ENCODE measurements at regions of chr7 and their contacts with region 1.

Region 1: DNA sequence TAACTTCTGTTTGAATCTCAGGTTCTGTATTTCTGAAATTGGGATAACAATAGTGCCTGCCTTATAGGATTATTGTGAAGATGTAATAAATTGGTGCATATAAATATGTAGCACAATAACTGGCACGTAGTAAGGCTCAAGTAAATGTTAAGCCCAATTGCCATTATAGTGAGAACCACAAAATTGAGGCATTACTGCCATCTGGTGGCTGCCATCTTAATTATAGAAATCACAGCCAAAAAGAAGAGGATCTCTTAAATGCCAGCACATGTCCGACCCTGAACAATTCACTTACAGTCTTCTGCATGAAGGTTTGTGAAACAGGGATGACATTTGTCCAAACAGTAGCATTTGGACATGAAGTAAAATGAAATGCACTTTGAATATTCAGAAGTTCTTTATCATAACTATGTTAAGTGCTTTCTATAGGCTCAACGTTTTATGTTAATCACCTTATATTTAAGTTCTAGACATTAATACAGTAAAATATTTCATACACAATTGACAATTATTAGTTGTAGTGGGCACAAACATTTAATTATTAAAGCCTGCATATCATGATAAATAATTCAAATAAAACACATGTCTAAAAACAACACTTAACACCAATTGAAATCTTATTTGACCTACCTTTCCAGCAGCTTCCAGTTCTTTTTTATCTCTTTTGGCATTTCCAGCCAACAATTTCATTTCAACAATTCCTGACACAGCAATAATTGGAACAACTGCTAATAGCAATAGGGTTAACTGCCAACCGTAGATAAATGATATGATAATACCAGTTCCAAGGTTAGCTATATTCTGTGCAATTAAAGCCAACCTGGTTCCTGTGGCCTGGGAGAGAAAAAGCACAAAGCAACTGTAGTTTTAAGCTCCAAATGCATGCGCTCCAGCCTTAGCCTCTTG is 58.5 kb downstream of the ABCB4 start:
- DNase-seq: peak; percentile 66
- H3K4me3 Mint-ChIP-seq: no peak overlapping the region
- H3K27ac Mint-ChIP-seq: no peak overlapping the region
- H3K4me1 Mint-ChIP-seq: no peaks in the 10 kb centered on the region
- H3K27me3 Mint-ChIP-seq: no peaks in the 10 kb centered on the region

Region 2: GRCh38 chr7:86592185-86592584 is 824.8 kb before region 1 on chr7:
- CTCF ChIA-PET with region 1: no interaction called
- POLR2A ChIA-PET with region 1: no interaction called
- intact Hi-C with region 1: no loop called
- DNase-seq: no peak
- H3K4me3 Mint-ChIP-seq: no peak overlapping the region
- H3K27ac Mint-ChIP-seq: no peak overlapping the region
- H3K4me1 Mint-ChIP-seq: no peaks in the 10 kb centered on the region
- H3K27me3 Mint-ChIP-seq: no peaks in the 10 kb centered on the region

Region 3: GRCh38 chr7:86914551-86914950 is 502.4 kb before region 1 on chr7:
- CTCF ChIA-PET with region 1: interaction called, 5 read pairs
- POLR2A ChIA-PET with region 1: no interaction called
- intact Hi-C with region 1: loop called (anchors 2 kb)
- DNase-seq: no peak
- H3K4me3 Mint-ChIP-seq: no peak overlapping the region
- H3K27ac Mint-ChIP-seq: no peak overlapping the region
- H3K4me1 Mint-ChIP-seq: peaks cover 7% of the 10 kb centered on the region
- H3K27me3 Mint-ChIP-seq: no peaks in the 10 kb centered on the region

Region 4: DNA sequence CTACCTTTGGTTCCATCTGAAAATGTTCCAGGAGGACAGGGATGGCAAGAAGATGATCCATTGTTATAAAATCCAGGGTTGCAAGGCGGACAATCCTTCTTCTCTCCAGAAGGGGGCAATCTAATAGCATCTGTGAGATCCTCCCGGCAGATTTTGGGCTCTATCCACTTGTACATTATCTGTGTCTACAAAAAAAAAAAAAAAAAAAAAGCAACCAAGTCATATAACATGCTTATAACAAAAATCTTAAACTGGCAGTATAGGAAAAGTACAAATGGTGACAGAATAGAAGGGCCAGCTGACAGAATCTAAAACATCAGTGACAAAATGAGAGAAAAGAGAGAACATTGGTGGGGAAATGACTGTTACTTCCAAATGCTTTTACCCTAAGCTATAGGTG is 490.2 kb before region 1 on chr7:
- CTCF ChIA-PET with region 1: interaction called, 49 read pairs
- POLR2A ChIA-PET with region 1: no interaction called
- intact Hi-C with region 1: no loop called
- DNase-seq: no peak
- H3K4me3 Mint-ChIP-seq: no peak overlapping the region
- H3K27ac Mint-ChIP-seq: no peak overlapping the region
- H3K4me1 Mint-ChIP-seq: peaks cover 4% of the 10 kb centered on the region
- H3K27me3 Mint-ChIP-seq: no peaks in the 10 kb centered on the region

Region 5: DNA sequence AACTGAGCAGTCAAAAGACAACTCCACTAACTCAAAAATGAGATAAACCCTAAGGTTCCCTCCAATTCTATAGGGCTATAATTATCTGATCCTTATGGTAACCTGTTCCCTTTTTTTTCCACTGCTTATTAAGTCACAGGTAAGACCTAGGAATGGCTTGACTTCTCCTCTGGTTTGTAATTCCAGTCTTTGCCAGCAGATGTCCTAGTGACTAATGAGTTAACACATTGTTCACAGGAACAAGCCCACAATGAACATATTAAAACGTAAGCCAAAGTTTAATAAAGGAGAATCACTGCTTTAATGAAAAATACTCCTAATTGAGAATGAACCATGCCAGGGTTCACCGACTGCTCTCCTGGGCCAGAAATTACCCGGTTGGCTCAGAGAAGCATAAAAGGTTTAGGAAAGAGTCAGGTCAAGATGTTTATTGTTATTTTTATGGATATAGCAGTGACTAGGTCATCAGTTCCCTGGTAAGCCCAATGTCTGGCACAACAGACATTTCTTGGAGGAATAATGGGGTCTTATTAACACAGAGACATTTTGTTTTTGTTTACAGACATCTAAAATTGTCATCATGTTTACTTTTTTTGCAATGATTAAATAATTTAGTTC is 477.6 kb before region 1 on chr7:
- CTCF ChIA-PET with region 1: interaction called, 11 read pairs
- POLR2A ChIA-PET with region 1: no interaction called
- intact Hi-C with region 1: loop called (anchors 1 kb)
- DNase-seq: no peak
- H3K4me3 Mint-ChIP-seq: no peak overlapping the region
- H3K27ac Mint-ChIP-seq: no peak overlapping the region
- H3K4me1 Mint-ChIP-seq: no peaks in the 10 kb centered on the region
- H3K27me3 Mint-ChIP-seq: no peaks in the 10 kb centered on the region

Region 6: DNA sequence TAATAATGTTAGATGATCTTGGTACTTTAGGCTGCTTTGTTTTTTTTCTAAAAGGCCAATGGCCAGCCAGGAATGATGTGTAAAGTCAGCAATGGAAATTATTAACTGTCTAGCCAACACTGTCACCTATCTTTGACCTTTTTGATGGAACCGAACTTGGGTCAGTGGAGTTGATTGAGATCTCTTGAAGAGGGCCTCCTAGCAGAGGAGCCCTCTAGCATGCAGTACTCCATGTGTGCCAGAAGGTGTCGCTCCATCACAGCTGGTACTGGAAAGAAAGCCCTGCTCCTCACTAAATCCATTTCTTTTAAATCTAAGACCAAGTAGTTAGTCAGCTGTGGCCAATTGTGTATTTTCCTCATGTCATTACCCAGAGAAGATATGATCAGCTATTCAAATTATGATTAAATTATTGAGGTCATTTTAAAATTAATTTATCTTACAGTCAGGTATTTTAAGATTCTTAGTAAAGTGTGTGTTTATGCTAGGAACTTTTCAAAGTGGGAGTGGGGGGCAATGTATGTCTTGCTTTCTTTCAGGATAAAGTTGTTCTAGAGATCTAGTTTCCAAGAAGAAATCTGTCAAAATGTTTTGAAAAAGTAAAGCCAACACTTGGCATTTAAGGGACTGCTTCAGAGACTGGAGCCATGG is 104.6 kb before region 1 on chr7:
- CTCF ChIA-PET with region 1: interaction called, 112 read pairs
- POLR2A ChIA-PET with region 1: no interaction called
- intact Hi-C with region 1: loop called (anchors 1 kb)
- DNase-seq: peak; percentile 52
- H3K4me3 Mint-ChIP-seq: no peak overlapping the region
- H3K27ac Mint-ChIP-seq: no peak overlapping the region
- H3K4me1 Mint-ChIP-seq: no peaks in the 10 kb centered on the region
- H3K27me3 Mint-ChIP-seq: no peaks in the 10 kb centered on the region

Region 7: DNA sequence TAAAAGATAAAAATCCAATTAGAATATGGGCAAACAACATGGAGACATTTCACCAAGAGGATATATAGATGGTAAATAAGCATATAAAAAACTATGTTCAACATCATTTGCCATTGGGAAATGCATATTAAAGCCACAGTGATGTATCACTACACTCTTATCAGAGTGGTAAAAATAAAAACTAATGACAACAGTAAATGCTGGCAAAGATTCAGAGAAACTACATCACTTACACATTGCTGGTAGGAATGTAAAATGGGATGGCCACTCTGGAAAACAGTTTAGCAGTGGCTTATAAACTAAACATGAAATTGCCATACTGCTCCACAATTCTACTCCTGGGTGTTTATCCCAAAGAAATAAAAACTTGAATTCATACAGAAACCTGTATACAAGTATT is 12.3 kb before region 1 on chr7:
- CTCF ChIA-PET with region 1: interaction called, 24 read pairs
- POLR2A ChIA-PET with region 1: no interaction called
- intact Hi-C with region 1: no loop called
- DNase-seq: no peak
- H3K4me3 Mint-ChIP-seq: no peak overlapping the region
- H3K27ac Mint-ChIP-seq: no peak overlapping the region
- H3K4me1 Mint-ChIP-seq: no peaks in the 10 kb centered on the region
- H3K27me3 Mint-ChIP-seq: no peaks in the 10 kb centered on the region

Region 8: GRCh38 chr7:87445897-87446296 is 29.0 kb after region 1 on chr7:
- CTCF ChIA-PET with region 1: no interaction called
- POLR2A ChIA-PET with region 1: no interaction called
- intact Hi-C with region 1: no loop called
- DNase-seq: no peak
- H3K4me3 Mint-ChIP-seq: no peak overlapping the region
- H3K27ac Mint-ChIP-seq: no peak overlapping the region
- H3K4me1 Mint-ChIP-seq: no peaks in the 10 kb centered on the region
- H3K27me3 Mint-ChIP-seq: peaks cover 9% of the 10 kb centered on the region